B cell (primary cell): ENCODE measurements at regions of chrX and their contacts with region 1.

Region 1: GRCh38 chrX:11329021-11329420 is 35.8 kb downstream of the AMELX start:
- DNase-seq: no peak
- ATAC-seq: no peak
- H3K4me3 ChIP-seq: no peak overlapping the region
- H3K4me3 Mint-ChIP-seq: no peak overlapping the region
- H3K27ac ChIP-seq: no peak overlapping the region
- H3K27ac Mint-ChIP-seq: no peak overlapping the region
- H3K4me1 ChIP-seq: no peaks in the 10 kb centered on the region
- H3K4me1 Mint-ChIP-seq: no peaks in the 10 kb centered on the region
- H3K27me3 ChIP-seq: no peaks in the 10 kb centered on the region
- H3K27me3 Mint-ChIP-seq: no peaks in the 10 kb centered on the region
- CTCF ChIP-seq: no peak

Region 2: DNA sequence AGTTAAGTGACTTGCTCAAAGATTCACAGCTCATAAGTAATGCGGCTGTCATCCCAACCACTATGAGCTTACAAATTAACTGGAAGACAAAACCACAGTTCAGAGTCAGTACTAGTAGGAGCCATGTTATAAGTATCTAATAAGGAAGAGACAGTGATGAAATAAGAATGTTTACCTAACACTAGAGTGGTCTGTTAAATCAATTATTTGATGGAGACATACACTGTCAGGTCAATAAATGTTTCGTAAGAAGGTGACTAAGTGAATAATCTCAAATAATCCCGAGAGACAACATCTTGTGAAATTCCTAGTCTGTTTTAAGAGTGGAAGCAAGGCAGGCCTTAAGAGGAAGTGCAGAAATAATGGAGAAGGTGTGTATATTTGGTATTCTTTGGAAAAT is 61.6 kb before region 1 on chrX:
- CTCF ChIA-PET with region 1: no interaction called
- POLR2A ChIA-PET with region 1: no interaction called
- intact Hi-C with region 1: no loop called
- DNase-seq: no peak
- ATAC-seq: no peak
- H3K4me3 ChIP-seq: no peak overlapping the region
- H3K4me3 Mint-ChIP-seq: no peak overlapping the region
- H3K27ac ChIP-seq: no peak overlapping the region
- H3K27ac Mint-ChIP-seq: no peak overlapping the region
- H3K4me1 ChIP-seq: no peaks in the 10 kb centered on the region
- H3K4me1 Mint-ChIP-seq: no peaks in the 10 kb centered on the region
- H3K27me3 ChIP-seq: no peaks in the 10 kb centered on the region
- H3K27me3 Mint-ChIP-seq: peaks cover 6% of the 10 kb centered on the region
- CTCF ChIP-seq: no peak

Region 3: DNA sequence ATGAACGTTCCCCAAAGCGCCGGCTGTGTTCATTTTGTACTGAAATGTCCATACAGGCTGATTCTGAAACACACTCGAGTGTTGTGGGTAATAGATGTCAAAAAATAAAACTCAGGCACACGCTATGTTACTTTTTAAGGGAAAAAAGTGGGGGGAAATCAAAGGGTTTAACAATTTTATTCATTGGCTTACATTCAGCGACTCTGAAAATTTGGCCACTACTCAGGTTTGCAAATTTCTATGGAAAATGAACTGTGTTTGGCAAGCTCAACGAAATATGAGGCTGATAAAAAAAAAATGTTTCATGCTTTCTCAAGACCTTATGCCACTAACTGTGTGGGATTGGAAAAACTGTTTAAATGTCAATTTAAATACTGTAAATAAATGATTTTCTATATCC is 17.3 kb before region 1 on chrX:
- CTCF ChIA-PET with region 1: no interaction called
- POLR2A ChIA-PET with region 1: no interaction called
- intact Hi-C with region 1: no loop called
- DNase-seq: no peak
- ATAC-seq: no peak
- H3K4me3 ChIP-seq: no peak overlapping the region
- H3K4me3 Mint-ChIP-seq: no peak overlapping the region
- H3K27ac ChIP-seq: no peak overlapping the region
- H3K27ac Mint-ChIP-seq: no peak overlapping the region
- H3K4me1 ChIP-seq: no peaks in the 10 kb centered on the region
- H3K4me1 Mint-ChIP-seq: no peaks in the 10 kb centered on the region
- H3K27me3 ChIP-seq: no peaks in the 10 kb centered on the region
- H3K27me3 Mint-ChIP-seq: peaks cover 8% of the 10 kb centered on the region
- CTCF ChIP-seq: no peak

Region 4: DNA sequence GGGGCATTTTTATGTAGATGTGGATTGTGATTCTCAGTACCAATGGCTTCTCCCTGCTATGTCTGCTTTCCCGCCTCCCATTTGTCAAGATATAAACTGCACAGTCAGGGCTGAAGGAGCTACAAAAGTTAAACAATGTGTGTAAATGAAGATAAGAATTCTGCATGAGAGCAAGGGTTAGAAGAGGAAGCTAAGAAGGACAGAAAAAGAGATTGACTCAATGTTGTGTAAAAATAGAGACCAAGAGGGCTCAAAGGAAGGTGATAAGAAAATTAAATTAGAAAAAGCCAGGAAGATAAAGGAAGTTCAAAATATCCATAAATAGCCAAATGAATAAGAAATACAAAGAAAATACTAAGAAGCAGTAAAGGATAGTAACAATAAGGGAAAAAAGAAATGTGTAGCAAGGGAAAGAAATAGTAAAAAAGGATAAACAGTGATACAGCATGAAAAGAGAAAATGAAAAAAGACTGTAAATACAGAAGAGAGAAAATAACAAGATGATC is 46.6 kb after region 1 on chrX:
- CTCF ChIA-PET with region 1: no interaction called
- POLR2A ChIA-PET with region 1: no interaction called
- intact Hi-C with region 1: loop called (anchors 10 kb)
- DNase-seq: no peak
- ATAC-seq: no peak
- H3K4me3 ChIP-seq: no peak overlapping the region
- H3K4me3 Mint-ChIP-seq: no peak overlapping the region
- H3K27ac ChIP-seq: no peak overlapping the region
- H3K27ac Mint-ChIP-seq: no peak overlapping the region
- H3K4me1 ChIP-seq: no peaks in the 10 kb centered on the region
- H3K4me1 Mint-ChIP-seq: peaks cover 2% of the 10 kb centered on the region
- H3K27me3 ChIP-seq: no peaks in the 10 kb centered on the region
- H3K27me3 Mint-ChIP-seq: peaks cover 7% of the 10 kb centered on the region
- CTCF ChIP-seq: no peak